Activated CD4-positive, alpha-beta memory T cell treated with anti-CD3 and anti-CD28 coated beads, Interleukin-2, amount 10 ng/mL, durations not matched to agents 7 days and 5 days (primary cell): ENCODE measurements at regions of chr2 and their contacts with region 1.

Region 1: DNA sequence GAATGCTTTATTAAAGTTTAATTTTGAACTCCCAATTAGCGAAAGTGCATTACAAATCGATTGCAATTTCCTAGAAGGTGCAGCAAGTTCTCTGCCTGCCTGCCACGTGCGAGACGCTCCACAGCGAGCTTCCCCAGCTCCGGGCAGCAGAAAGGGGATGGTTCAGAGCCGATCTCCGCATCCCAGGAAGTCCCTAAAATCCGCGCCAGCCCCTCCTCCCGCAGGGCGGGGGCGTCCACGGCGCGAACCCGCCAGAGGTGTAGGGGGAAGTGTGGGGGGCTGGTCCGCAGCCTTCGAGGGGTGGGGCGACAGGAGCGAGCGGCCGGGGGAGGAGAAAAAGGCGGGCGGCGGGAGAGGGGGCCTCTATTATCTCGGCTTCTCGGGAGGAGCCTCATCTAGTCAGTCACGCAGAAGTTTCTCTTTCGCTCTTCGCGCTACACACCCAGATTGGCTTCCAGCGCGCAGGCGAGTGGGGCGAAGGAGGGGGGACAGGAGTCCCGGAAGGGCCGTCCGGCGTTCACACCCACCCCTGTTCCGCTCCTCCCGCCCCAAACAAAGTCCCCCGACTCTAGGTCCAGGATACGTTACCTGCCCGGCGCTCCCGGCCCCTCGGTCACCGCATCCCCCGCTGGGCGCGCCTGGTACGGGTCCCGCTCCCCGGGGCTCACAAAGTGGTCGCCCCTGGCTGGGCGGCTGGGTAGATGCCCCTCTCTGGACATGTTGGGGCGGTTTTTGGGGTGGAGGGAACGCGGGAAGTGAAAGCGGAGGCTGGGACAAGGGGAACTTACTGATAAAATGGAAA is 9.1 kb upstream of the NR4A2 start:
- DNase-seq: peak; percentile 88
- H3K4me3 Mint-ChIP-seq: peak overlapping the region; percentile 84
- H3K27ac Mint-ChIP-seq: peak overlapping the region; percentile 90
- H3K4me1 Mint-ChIP-seq: peaks cover 44% of the 10 kb centered on the region
- H3K27me3 Mint-ChIP-seq: no peaks in the 10 kb centered on the region

Region 2: GRCh38 chr2:156400706-156401678 is 59.3 kb after region 1 on chr2:
- CTCF ChIA-PET with region 1: interaction called, 10 read pairs
- POLR2A ChIA-PET with region 1: interaction called, 88 read pairs
- DNase-seq: peak; percentile 80
- H3K4me3 Mint-ChIP-seq: peak overlapping the region; percentile 73
- H3K27ac Mint-ChIP-seq: peak overlapping the region; percentile 81
- H3K4me1 Mint-ChIP-seq: peaks cover 30% of the 10 kb centered on the region
- H3K27me3 Mint-ChIP-seq: no peaks in the 10 kb centered on the region

Region 3: GRCh38 chr2:156435715-156436496 is 94.3 kb after region 1 on chr2 and contains the start of gene GPD2:
- CTCF ChIA-PET with region 1: no interaction called
- POLR2A ChIA-PET with region 1: interaction called, 31 read pairs
- DNase-seq: peak; percentile 64
- H3K4me3 Mint-ChIP-seq: peak within 1 kb of the TSS; percentile 89
- H3K27ac Mint-ChIP-seq: peak within 1 kb of the TSS; percentile 71
- H3K4me1 Mint-ChIP-seq: peaks cover 43% of the 10 kb centered on the region
- H3K27me3 Mint-ChIP-seq: no peaks in the 10 kb centered on the region
- total RNA-seq, gene GPD2: 20.5 to 27.3 TPM

Region 4: GRCh38 chr2:156589381-156590079 is 247.9 kb after region 1 on chr2:
- CTCF ChIA-PET with region 1: interaction called, 11 read pairs
- POLR2A ChIA-PET with region 1: interaction called, 3 read pairs
- DNase-seq: peak; percentile 19
- H3K4me3 Mint-ChIP-seq: no peak overlapping the region
- H3K27ac Mint-ChIP-seq: no peak overlapping the region
- H3K4me1 Mint-ChIP-seq: peaks cover 2% of the 10 kb centered on the region
- H3K27me3 Mint-ChIP-seq: no peaks in the 10 kb centered on the region